Activated CD4-positive, alpha-beta memory T cell treated with anti-CD3 and anti-CD28 coated beads for 36 hours (primary cell): ENCODE measurements at regions of chr1 and their contacts with region 1.

Region 1: DNA sequence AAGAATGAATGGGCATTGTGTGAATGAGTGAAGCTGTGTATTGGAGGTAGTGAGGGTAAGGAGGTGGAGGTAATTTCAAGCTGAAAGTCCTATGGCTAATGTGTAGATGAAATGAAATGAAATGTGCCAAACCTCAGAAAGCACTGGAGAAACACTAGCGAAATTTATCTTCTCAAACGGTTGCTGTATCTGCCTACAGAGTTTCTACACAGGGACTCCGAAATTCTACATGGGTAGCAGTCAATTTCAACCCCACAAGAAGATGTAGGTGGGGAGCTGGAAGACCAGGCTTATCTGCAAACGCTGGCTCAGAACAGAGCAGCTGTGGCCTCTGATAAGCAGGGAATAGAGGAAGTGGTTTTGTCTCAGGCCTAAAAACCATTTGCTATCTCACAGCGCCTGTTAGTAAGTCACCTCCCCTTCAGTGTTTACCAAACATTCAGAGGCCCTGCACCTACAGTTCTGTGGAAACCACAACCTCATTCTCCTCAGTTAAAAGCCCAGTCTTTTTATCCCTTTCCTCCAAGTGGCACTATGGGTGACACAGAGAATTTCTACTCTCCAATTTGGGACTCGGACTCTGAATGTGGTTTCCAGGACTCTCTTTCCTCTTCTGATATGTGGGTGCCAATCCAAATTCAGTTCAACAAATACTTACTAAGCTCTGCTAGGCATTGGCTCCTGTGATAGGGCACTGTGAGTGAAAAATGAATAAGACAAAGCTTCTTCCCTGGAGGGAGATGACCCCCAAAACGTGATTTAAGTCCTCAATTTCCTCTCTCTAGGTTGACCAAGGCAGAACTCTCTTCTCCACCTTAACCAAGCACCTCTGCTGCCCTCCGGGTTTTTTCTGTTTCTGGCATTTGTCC is 17.2 kb upstream of the SLAMF6 start:
- DNase-seq: peak; percentile 71
- H3K4me3 Mint-ChIP-seq: peak overlapping the region; percentile 46
- H3K27ac Mint-ChIP-seq: peak overlapping the region; percentile 95
- H3K4me1 Mint-ChIP-seq: peaks cover 59% of the 10 kb centered on the region
- H3K27me3 Mint-ChIP-seq: no peaks in the 10 kb centered on the region

Region 2: DNA sequence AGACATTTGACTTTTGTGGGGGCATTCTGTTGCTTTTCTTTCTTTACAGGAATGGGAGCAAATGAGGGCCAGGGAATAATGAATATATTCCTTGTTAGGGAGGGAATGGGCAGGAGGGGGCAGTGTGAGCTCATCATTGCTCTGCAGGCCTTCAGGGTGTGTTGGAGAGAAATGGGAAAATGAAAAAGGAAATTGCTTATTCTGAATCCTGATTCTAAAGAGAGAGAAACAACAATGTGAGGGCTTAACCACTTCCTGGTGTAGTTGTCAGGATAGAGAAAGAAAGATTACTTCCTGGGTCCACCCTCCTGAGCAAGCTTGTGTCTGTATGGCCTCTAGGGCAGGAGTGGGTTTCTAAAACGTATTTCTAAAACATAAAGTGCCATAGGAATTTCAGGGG is 111.6 kb before region 1 on chr1:
- CTCF ChIA-PET with region 1: interaction called, 14 read pairs
- POLR2A ChIA-PET with region 1: no interaction called
- intact Hi-C with region 1: loop called (anchors 1 kb)
- DNase-seq: peak; percentile 57
- H3K4me3 Mint-ChIP-seq: no peak overlapping the region
- H3K27ac Mint-ChIP-seq: peak overlapping the region; percentile 77
- H3K4me1 Mint-ChIP-seq: peaks cover 60% of the 10 kb centered on the region
- H3K27me3 Mint-ChIP-seq: no peaks in the 10 kb centered on the region

Region 3: GRCh38 chr1:160451119-160451858 is 88.9 kb before region 1 on chr1:
- CTCF ChIA-PET with region 1: interaction called, 8 read pairs
- POLR2A ChIA-PET with region 1: interaction called, 3 read pairs
- intact Hi-C with region 1: loop called (anchors 1 kb)
- DNase-seq: peak; percentile 45
- H3K4me3 Mint-ChIP-seq: peak overlapping the region; percentile 53
- H3K27ac Mint-ChIP-seq: peak overlapping the region; percentile 97
- H3K4me1 Mint-ChIP-seq: peaks cover 79% of the 10 kb centered on the region
- H3K27me3 Mint-ChIP-seq: no peaks in the 10 kb centered on the region

Region 4: DNA sequence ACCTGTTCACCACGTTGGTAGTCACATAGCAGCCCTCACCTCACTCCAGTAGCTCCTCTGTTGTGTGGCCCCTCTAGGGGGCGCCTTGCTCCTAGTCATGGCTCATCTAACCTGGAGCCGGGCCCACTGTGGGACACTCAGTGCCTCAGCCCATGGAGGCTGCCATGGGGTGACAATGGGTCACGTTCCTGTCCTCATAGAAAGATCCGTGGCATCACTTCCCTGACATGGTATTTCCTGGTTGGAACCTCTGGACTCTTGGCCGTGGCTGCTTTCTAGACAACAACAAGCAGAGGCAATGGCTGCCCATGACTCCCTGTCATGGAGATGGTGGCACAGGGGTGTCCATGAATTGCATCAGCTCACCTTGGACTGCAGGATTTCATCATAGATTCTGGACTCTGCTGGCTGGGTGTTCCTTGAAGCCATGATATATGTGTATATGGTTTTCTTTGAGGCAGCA is 10.4 kb after region 1 on chr1:
- CTCF ChIA-PET with region 1: interaction called, 59 read pairs
- POLR2A ChIA-PET with region 1: interaction called, 3 read pairs
- intact Hi-C with region 1: no loop called
- DNase-seq: peak; percentile 82
- H3K4me3 Mint-ChIP-seq: no peak overlapping the region
- H3K27ac Mint-ChIP-seq: peak overlapping the region; percentile 61
- H3K4me1 Mint-ChIP-seq: peaks cover 34% of the 10 kb centered on the region
- H3K27me3 Mint-ChIP-seq: no peaks in the 10 kb centered on the region